ENCODE measurements at regions of chr4 and their contacts with region 1.

Region 1: GRCh38 chr4:143451186-143451585 is 62.3 kb upstream of the SMARCA5 start:
- DNase-seq: no peak
- ATAC-seq: no peak
- H3K4me3 ChIP-seq: no peak overlapping the region
- H3K27ac ChIP-seq: no peak overlapping the region
- H3K4me1 ChIP-seq: no peaks in the 10 kb centered on the region
- H3K27me3 ChIP-seq: no peaks in the 10 kb centered on the region

Region 2: DNA sequence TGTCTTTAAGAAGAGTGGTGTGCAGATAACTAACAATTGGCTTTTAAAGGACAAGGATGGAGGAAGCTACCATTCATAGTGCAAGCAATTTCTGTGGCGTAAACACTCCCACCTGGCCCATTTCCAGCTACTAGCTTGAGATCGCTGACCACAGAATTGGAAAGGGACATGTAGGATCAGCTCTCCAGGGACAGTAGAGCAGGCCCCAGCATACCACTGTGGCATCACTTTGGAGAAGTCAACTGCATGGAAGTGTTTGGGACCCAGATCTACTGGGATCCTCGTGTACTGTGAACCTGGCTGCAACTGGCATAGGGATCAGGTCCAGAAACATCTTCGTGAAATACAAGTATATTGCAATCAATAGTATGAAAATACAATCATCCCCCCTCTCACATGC is 1120.1 kb before region 1 on chr4:
- intact Hi-C with region 1: loop called in 1 of 4 experiments (anchors 5 kb)
- DNase-seq: peak in 1 of 3 donors; percentile 37
- ATAC-seq: peak in 1 of 2 donors; percentile 29
- H3K4me3 ChIP-seq: no peak overlapping the region
- H3K27ac ChIP-seq: no peak overlapping the region
- H3K4me1 ChIP-seq: peaks cover 3% of the 10 kb centered on the region
- H3K27me3 ChIP-seq: no peaks in the 10 kb centered on the region

Region 3: GRCh38 chr4:143019351-143019750 is 431.8 kb before region 1 on chr4:
- intact Hi-C with region 1: no loop called
- DNase-seq: no peak
- ATAC-seq: no peak
- H3K4me3 ChIP-seq: no peak overlapping the region
- H3K27ac ChIP-seq: no peak overlapping the region
- H3K4me1 ChIP-seq: no peaks in the 10 kb centered on the region
- H3K27me3 ChIP-seq: no peaks in the 10 kb centered on the region

Region 4: DNA sequence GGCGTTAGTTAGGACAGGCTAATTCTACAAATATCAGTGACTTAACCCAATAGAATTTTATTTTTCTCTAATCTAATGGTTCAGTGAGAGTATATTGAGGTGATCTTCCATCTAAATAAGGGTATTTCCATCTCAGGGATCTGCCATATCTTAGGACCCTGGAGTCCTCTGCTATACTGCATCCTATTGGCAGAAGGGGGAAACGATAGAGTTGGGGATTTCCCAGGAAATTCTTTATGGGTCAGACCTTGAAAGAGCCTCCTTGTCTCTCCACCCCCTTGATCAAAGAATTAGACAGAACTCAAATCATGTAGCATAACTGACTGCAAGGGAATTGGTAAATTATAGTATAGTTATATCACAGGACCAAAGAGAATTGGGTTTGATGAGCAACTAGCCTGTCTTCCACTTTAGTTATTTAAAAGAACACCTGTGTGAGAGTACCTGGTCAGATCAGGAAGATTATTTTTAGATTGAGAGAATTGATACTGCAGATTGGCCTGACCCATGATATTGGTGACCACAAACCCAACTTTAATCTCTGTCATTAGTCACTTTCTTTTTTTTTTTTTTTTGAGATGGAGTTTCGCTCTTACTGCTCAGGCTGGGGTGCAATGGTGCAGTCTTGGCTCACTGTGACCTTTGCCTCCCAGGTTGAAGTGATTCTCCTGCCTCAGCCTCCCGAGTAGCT is 87.9 kb after region 1 on chr4:
- intact Hi-C with region 1: no loop called
- DNase-seq: no peak
- ATAC-seq: no peak
- H3K4me3 ChIP-seq: no peak overlapping the region
- H3K27ac ChIP-seq: no peak overlapping the region
- H3K4me1 ChIP-seq: no peaks in the 10 kb centered on the region
- H3K27me3 ChIP-seq: no peaks in the 10 kb centered on the region

Measured in right cardiac atrium (tissue), 5 donors.